ENCODE measurements at regions of chr17 and their contacts with region 1.

Region 1: GRCh38 chr17:76121932-76122430 is 18.4 kb upstream of the EXOC7 start:
- DNase-seq: no peak
- H3K4me3 ChIP-seq: peak overlapping the region in 1 of 3 experiments; percentile 8
- H3K27ac ChIP-seq: peak overlapping the region; percentile 14
- H3K4me1 ChIP-seq: peaks cover 3% of the 10 kb centered on the region
- H3K27me3 ChIP-seq: no peaks in the 10 kb centered on the region
- CTCF ChIP-seq: no peak
- POLR2A ChIP-seq: no peak

Region 2: GRCh38 chr17:75601057-75602051 is 520.6 kb before region 1 on chr17:
- CTCF ChIA-PET with region 1: no interaction called
- POLR2A ChIA-PET with region 1: no interaction called
- dilution Hi-C with region 1: no loop called
- intact Hi-C with region 1: no loop called
- DNase-seq: peak; percentile 30
- H3K4me3 ChIP-seq: no peak overlapping the region
- H3K27ac ChIP-seq: no peak overlapping the region
- H3K4me1 ChIP-seq: no peaks in the 10 kb centered on the region
- H3K27me3 ChIP-seq: no peaks in the 10 kb centered on the region
- CTCF ChIP-seq: peak; percentile 61 to 81
- POLR2A ChIP-seq: no peak

Region 3: GRCh38 chr17:76141212-76142038 is 19.4 kb after region 1 on chr17 and contains the start of gene FOXJ1:
- CTCF ChIA-PET with region 1: interaction called, 24 read pairs
- POLR2A ChIA-PET with region 1: no interaction called
- dilution Hi-C with region 1: no loop called
- intact Hi-C with region 1: no loop called
- DNase-seq: peak; percentile 95
- H3K4me3 ChIP-seq: peak within 1 kb of the TSS in 2 of 3 experiments; percentile 39 to 56
- H3K27ac ChIP-seq: no peak within 1 kb of the TSS
- H3K4me1 ChIP-seq: peaks cover 19% of the 10 kb centered on the region
- H3K27me3 ChIP-seq: peaks cover 16 to 22% of the 10 kb centered on the region in 2 experiments
- CTCF ChIP-seq: no peak
- POLR2A ChIP-seq: no peak
- total RNA-seq, gene FOXJ1: not detected in 2 replicates

Region 4: GRCh38 chr17:76147211-76148014 is 25.4 kb after region 1 on chr17:
- CTCF ChIA-PET with region 1: interaction called, 24 read pairs
- POLR2A ChIA-PET with region 1: no interaction called
- dilution Hi-C with region 1: no loop called
- intact Hi-C with region 1: loop called (anchors 1 kb)
- DNase-seq: peak; percentile 27
- H3K4me3 ChIP-seq: no peak overlapping the region
- H3K27ac ChIP-seq: no peak overlapping the region
- H3K4me1 ChIP-seq: peaks cover 15% of the 10 kb centered on the region
- H3K27me3 ChIP-seq: peaks cover 0 to 2% of the 10 kb centered on the region in 2 experiments
- CTCF ChIP-seq: peak; percentile 24 to 43
- POLR2A ChIP-seq: no peak

Region 5: GRCh38 chr17:76232342-76232741 is 110.4 kb after region 1 on chr17:
- CTCF ChIA-PET with region 1: no interaction called
- POLR2A ChIA-PET with region 1: no interaction called
- dilution Hi-C with region 1: no loop called
- intact Hi-C with region 1: no loop called
- DNase-seq: no peak
- H3K4me3 ChIP-seq: no peak overlapping the region
- H3K27ac ChIP-seq: no peak overlapping the region
- H3K4me1 ChIP-seq: no peaks in the 10 kb centered on the region
- H3K27me3 ChIP-seq: peaks cover 22 to 27% of the 10 kb centered on the region in 2 experiments
- CTCF ChIP-seq: no peak
- POLR2A ChIP-seq: no peak

Region 6: GRCh38 chr17:76264755-76265596 is 143.0 kb after region 1 on chr17 and contains the start of gene UBALD2:
- CTCF ChIA-PET with region 1: interaction called, 320 read pairs
- POLR2A ChIA-PET with region 1: interaction called, 3 read pairs
- dilution Hi-C with region 1: no loop called
- intact Hi-C with region 1: loop called (anchors 5 kb)
- DNase-seq: peak; percentile 100
- H3K4me3 ChIP-seq: peak within 1 kb of the TSS; percentile 78 to 84 (median 80)
- H3K27ac ChIP-seq: peak within 1 kb of the TSS; percentile 97
- H3K4me1 ChIP-seq: peaks cover 54% of the 10 kb centered on the region
- H3K27me3 ChIP-seq: no peaks in the 10 kb centered on the region
- CTCF ChIP-seq: no peak
- POLR2A ChIP-seq: peak; percentile 42
- total RNA-seq, gene UBALD2: 70.9 and 75.2 TPM in 2 replicates

Region 7: DNA sequence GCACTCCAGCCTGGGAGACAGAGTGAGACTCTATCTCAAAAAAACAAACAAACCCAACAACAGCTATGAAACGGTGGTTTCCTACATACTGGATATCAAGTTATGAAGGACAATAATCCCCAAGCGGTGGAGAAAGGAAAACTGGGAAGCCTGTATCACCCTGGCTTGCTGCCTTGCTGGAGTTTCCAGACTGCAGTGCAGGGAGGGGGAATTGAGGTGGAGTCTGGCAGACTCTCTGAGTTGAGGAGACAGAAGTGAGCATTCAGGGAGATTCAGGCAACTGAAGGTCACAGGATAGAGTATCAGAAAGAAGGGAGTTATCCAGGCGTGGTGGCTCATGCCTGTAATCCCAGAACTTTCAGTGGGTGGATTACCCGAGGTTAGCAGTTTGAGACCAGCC is 174.2 kb after region 1 on chr17:
- CTCF ChIA-PET with region 1: interaction called, 8 read pairs
- POLR2A ChIA-PET with region 1: no interaction called
- dilution Hi-C with region 1: no loop called
- intact Hi-C with region 1: loop called (anchors 5 kb)
- DNase-seq: no peak
- H3K4me3 ChIP-seq: no peak overlapping the region
- H3K27ac ChIP-seq: no peak overlapping the region
- H3K4me1 ChIP-seq: peaks cover 4% of the 10 kb centered on the region
- H3K27me3 ChIP-seq: no peaks in the 10 kb centered on the region
- CTCF ChIP-seq: no peak
- POLR2A ChIP-seq: no peak

Measured in endothelial cell of umbilical vein (primary cell).